CD8-positive, alpha-beta T cell (primary cell): ENCODE measurements at regions of chr2 and their contacts with region 1.

Region 1: DNA sequence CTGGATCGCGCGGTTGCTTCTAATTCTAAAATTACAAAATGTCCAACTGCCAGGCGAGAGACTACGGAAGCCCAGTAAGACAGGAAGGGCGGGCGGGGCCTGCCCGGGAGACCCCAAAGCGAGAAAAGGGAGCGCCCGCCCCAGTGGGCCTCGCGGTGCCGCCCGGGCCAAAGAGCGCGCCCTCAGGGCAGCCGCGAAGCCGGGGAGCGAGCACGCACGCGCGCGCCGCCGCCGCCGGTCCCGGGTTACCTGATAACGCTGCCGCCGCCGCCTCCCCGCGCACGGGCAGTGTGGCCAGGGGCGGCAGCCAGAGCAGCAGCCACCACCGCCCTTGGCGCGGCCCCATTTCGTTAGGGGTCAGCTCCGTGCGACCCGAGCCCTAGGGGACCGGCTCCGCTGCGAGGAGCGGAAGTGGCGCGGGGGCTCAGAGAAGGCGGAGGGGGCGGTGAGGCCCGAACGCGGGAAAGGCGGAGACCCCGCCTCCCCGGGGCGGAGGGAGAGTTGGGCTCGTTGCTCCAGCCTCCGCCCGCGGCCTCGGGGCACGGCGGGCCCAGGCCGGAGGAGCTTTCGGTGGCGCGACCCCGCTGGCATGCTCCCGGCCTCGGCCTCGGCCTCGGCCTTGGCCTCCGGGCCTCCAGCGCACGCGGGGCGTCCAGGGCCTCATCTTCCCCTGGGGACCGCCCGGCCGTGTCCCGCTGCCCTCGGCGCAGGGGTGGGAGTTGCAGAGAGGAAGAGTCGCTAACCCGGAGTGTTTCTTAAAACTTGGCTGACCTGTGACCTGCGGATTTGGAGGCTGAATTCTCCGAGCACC is at the start of gene NEMP2:
- DNase-seq: peak; percentile 69 to 93 (median 81)
- ATAC-seq: peak; percentile 68
- H3K4me3 ChIP-seq: peak within 1 kb of the TSS; percentile 67 to 73
- H3K4me3 Mint-ChIP-seq: peak within 1 kb of the TSS; percentile 96
- H3K27ac ChIP-seq: peak within 1 kb of the TSS; percentile 92 to 95
- H3K27ac Mint-ChIP-seq: peak within 1 kb of the TSS; percentile 100
- H3K4me1 ChIP-seq: peaks cover 39% of the 10 kb centered on the region
- H3K4me1 Mint-ChIP-seq: peaks cover 64% of the 10 kb centered on the region
- H3K27me3 ChIP-seq: no peaks in the 10 kb centered on the region
- H3K27me3 Mint-ChIP-seq: no peaks in the 10 kb centered on the region
- CTCF ChIP-seq: no peak
- total RNA-seq, gene NEMP2: 7.2 to 7.8 TPM

Region 2: GRCh38 chr2:189674374-189675112 is 860.0 kb before region 1 on chr2 and contains the start of gene ANKAR:
- CTCF ChIA-PET with region 1: no interaction called
- POLR2A ChIA-PET with region 1: no interaction called
- intact Hi-C with region 1: loop called in 1 of 2 experiments (anchors 10 kb)
- DNase-seq: peak; percentile 64 to 91 (median 79)
- ATAC-seq: peak; percentile 91
- H3K4me3 ChIP-seq: peak within 1 kb of the TSS; percentile 81 to 88
- H3K4me3 Mint-ChIP-seq: peak within 1 kb of the TSS; percentile 91
- H3K27ac ChIP-seq: peak within 1 kb of the TSS; percentile 86 to 97
- H3K27ac Mint-ChIP-seq: peak within 1 kb of the TSS; percentile 99
- H3K4me1 ChIP-seq: peaks cover 11% of the 10 kb centered on the region
- H3K4me1 Mint-ChIP-seq: peaks cover 49% of the 10 kb centered on the region
- H3K27me3 ChIP-seq: no peaks in the 10 kb centered on the region
- H3K27me3 Mint-ChIP-seq: no peaks in the 10 kb centered on the region
- CTCF ChIP-seq: peak; percentile 72
- total RNA-seq, gene ANKAR: 7.3 to 9.2 TPM

Region 3: GRCh38 chr2:190319555-190320498 is 214.7 kb before region 1 on chr2 and contains the start of gene HIBCH:
- CTCF ChIA-PET with region 1: interaction called, 3 read pairs
- POLR2A ChIA-PET with region 1: interaction called, 3 read pairs
- intact Hi-C with region 1: loop called in 1 of 2 experiments (anchors 5 kb)
- DNase-seq: peak; percentile 51 to 91 (median 83)
- ATAC-seq: peak; percentile 89
- H3K4me3 ChIP-seq: peak within 1 kb of the TSS; percentile 77 to 94
- H3K4me3 Mint-ChIP-seq: peak within 1 kb of the TSS; percentile 100
- H3K27ac ChIP-seq: peak within 1 kb of the TSS; percentile 66 to 88
- H3K27ac Mint-ChIP-seq: peak within 1 kb of the TSS; percentile 98
- H3K4me1 ChIP-seq: peaks cover 19% of the 10 kb centered on the region
- H3K4me1 Mint-ChIP-seq: peaks cover 50% of the 10 kb centered on the region
- H3K27me3 ChIP-seq: no peaks in the 10 kb centered on the region
- H3K27me3 Mint-ChIP-seq: no peaks in the 10 kb centered on the region
- CTCF ChIP-seq: peak; percentile 70
- total RNA-seq, gene HIBCH: 3.7 to 5.8 TPM

Region 4: GRCh38 chr2:190507135-190507534 is 27.4 kb before region 1 on chr2:
- CTCF ChIA-PET with region 1: no interaction called
- POLR2A ChIA-PET with region 1: no interaction called
- intact Hi-C with region 1: no loop called
- DNase-seq: no peak
- ATAC-seq: no peak
- H3K4me3 ChIP-seq: no peak overlapping the region
- H3K4me3 Mint-ChIP-seq: no peak overlapping the region
- H3K27ac ChIP-seq: no peak overlapping the region
- H3K27ac Mint-ChIP-seq: peak overlapping the region; percentile 81
- H3K4me1 ChIP-seq: no peaks in the 10 kb centered on the region
- H3K4me1 Mint-ChIP-seq: peaks cover 11% of the 10 kb centered on the region
- H3K27me3 ChIP-seq: no peaks in the 10 kb centered on the region
- H3K27me3 Mint-ChIP-seq: no peaks in the 10 kb centered on the region
- CTCF ChIP-seq: no peak

Region 5: GRCh38 chr2:190519975-190520767 is 14.3 kb before region 1 on chr2:
- CTCF ChIA-PET with region 1: interaction called, 5 read pairs
- POLR2A ChIA-PET with region 1: interaction called, 25 read pairs
- intact Hi-C with region 1: loop called in 1 of 2 experiments (anchors 1 kb)
- DNase-seq: peak in 1 of 9 experiments; percentile 48
- ATAC-seq: peak; percentile 74
- H3K4me3 ChIP-seq: no peak overlapping the region
- H3K4me3 Mint-ChIP-seq: peak overlapping the region; percentile 2
- H3K27ac ChIP-seq: peak overlapping the region in 1 of 2 experiments; percentile 49
- H3K27ac Mint-ChIP-seq: peak overlapping the region; percentile 22
- H3K4me1 ChIP-seq: peaks cover 41% of the 10 kb centered on the region
- H3K4me1 Mint-ChIP-seq: peaks cover 54% of the 10 kb centered on the region
- H3K27me3 ChIP-seq: no peaks in the 10 kb centered on the region
- H3K27me3 Mint-ChIP-seq: no peaks in the 10 kb centered on the region
- CTCF ChIP-seq: no peak

Region 6: DNA sequence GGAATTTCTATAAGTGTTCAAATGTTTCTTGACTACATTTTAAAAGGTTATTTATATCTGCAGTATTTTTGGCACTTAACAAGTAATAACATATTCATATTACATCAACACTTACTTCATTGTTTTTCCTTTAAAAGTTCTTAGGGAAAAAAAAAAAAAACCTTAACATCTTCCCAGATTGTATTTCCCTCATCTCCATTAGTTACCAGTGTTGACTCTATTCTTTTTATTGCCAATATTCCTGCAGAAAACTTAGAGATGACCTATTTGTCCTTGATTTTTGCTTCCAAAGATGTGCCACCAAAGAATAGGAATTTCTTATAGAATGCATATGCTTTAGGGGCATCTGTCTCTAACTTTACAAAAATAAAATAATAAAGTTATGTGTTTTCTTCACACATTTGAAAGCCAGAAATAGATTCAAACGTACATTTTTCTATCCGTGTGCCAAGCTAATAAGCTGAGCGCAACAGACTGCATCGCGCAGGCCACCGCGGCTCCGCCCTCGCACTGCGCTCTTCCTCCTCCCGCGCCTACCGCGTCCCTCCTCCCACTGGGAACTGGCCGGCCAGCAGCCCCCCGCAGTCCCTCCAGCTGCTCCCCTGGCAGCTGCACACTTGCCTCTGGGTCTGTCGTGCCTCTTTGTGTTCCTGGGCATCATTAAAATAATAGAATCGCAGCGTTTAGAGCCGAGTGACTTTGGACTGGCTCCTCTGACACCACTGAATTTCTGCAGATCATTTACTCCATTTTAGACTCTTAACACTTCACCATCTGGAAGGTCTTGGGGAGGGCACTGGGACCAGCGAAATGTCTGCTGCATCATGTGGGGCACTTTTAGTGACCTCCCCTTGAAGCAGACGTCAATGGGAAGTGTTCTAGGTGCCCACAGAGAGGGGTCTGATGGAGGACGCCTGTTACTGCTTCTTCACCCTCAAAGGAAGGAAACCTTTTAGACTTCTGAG is 93.2 kb after region 1 on chr2:
- CTCF ChIA-PET with region 1: no interaction called
- POLR2A ChIA-PET with region 1: no interaction called
- intact Hi-C with region 1: loop called in 1 of 2 experiments (anchors 5 kb)
- DNase-seq: peak in 6 of 9 experiments; percentile 26 to 59 (median 36)
- ATAC-seq: peak; percentile 82
- H3K4me3 ChIP-seq: peak overlapping the region; percentile 57 to 60
- H3K4me3 Mint-ChIP-seq: peak overlapping the region; percentile 94
- H3K27ac ChIP-seq: peak overlapping the region; percentile 33 to 35
- H3K27ac Mint-ChIP-seq: peak overlapping the region; percentile 92
- H3K4me1 ChIP-seq: peaks cover 13% of the 10 kb centered on the region
- H3K4me1 Mint-ChIP-seq: peaks cover 27% of the 10 kb centered on the region
- H3K27me3 ChIP-seq: no peaks in the 10 kb centered on the region
- H3K27me3 Mint-ChIP-seq: no peaks in the 10 kb centered on the region
- CTCF ChIP-seq: no peak

Region 7: GRCh38 chr2:190755772-190756415 is 221.4 kb after region 1 on chr2:
- CTCF ChIA-PET with region 1: no interaction called
- POLR2A ChIA-PET with region 1: no interaction called
- intact Hi-C with region 1: no loop called
- DNase-seq: no peak
- ATAC-seq: no peak
- H3K4me3 ChIP-seq: no peak overlapping the region
- H3K4me3 Mint-ChIP-seq: no peak overlapping the region
- H3K27ac ChIP-seq: no peak overlapping the region
- H3K27ac Mint-ChIP-seq: no peak overlapping the region
- H3K4me1 ChIP-seq: no peaks in the 10 kb centered on the region
- H3K4me1 Mint-ChIP-seq: peaks cover 5% of the 10 kb centered on the region
- H3K27me3 ChIP-seq: no peaks in the 10 kb centered on the region
- H3K27me3 Mint-ChIP-seq: no peaks in the 10 kb centered on the region
- CTCF ChIP-seq: no peak

Region 8: DNA sequence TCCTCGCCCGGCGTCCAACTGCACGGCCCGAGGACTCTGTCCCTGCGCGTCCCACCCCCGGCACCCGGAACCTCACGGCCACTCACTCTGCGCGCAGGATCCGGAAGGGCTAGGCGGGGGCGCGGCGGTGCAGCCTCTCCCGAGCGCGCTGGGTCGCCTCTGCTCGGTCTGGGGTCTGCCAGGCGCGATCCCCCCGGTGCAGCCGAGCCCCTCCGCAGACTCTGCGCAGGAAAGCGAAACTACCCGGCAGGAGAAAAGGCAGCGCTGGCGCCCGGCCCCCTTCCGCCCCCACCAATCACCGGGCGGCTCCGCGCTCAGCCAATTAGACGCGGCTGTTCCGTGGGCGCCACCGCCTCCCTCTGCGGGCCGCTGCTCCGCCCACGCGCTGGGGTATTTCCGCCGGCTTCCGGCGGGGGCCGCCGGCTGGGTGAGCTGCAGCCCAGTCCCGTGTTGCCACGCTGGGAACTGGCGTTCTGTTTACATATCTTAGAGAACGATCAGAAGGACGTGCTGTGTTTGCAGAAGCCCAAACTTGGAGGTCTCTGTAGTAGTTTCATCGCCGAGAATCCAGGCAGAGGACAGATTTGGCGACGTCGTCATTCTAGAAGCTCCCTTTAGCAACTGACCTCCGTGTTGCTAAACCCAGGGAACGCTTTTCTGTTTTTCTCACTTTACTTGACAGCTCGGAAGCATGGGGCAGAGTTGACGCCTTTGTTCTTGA is 479.6 kb after region 1 on chr2 and contains the start of gene STAT1:
- CTCF ChIA-PET with region 1: no interaction called
- POLR2A ChIA-PET with region 1: no interaction called
- intact Hi-C with region 1: loop called in 1 of 2 experiments (anchors 10 kb)
- DNase-seq: peak; percentile 93 to 98 (median 96)
- ATAC-seq: peak; percentile 87
- H3K4me3 ChIP-seq: peak within 1 kb of the TSS; percentile 61 to 88
- H3K4me3 Mint-ChIP-seq: no peak within 1 kb of the TSS
- H3K27ac ChIP-seq: peak within 1 kb of the TSS; percentile 91 to 94
- H3K27ac Mint-ChIP-seq: no peak within 1 kb of the TSS
- H3K4me1 ChIP-seq: peaks cover 59% of the 10 kb centered on the region
- H3K4me1 Mint-ChIP-seq: peaks cover 44% of the 10 kb centered on the region
- H3K27me3 ChIP-seq: no peaks in the 10 kb centered on the region
- H3K27me3 Mint-ChIP-seq: no peaks in the 10 kb centered on the region
- CTCF ChIP-seq: no peak
- total RNA-seq, gene STAT1: 66.7 to 69.9 TPM

Region 9: DNA sequence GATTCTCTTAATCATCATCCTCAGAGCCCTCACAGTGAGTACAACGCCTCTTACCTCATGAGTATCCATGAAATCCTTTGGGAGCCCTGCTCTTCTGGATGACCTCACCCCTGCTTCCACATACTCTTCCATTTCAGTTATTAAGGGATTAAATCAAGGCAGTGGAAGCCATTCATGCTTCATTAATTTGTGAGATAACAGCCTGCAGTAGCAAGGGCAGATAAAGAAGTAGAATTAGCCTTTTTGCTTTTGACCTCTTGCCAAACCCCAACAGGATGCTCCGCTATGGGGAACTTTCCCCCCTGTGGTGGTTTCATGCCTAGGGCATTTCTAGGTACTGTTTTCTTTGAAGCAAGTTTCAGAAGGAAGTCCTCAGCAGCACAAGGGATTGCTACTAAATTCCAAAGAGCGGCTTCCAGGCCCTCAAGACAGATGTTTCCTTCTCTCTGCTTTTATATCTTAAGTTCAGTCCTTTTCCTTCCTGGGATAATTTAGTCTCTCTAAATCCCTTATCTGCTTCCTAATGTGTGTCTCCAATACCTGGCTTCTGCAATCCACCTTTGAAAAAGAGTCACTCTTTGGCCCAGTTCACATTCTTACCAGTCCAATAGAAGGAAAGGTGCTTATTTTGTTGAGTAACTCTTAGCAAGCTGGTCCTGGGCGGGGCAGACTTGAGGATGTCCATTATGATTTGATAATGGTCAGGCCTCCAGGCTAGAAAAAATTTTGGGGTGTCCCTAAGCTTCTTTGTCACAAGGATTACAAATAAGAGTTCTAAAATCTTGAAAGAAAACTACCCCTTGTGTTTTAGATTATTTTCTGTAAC is 787.6 kb after region 1 on chr2:
- CTCF ChIA-PET with region 1: no interaction called
- POLR2A ChIA-PET with region 1: no interaction called
- intact Hi-C with region 1: no loop called
- DNase-seq: peak in 2 of 9 experiments; percentile 23 to 52
- ATAC-seq: no peak
- H3K4me3 ChIP-seq: no peak overlapping the region
- H3K4me3 Mint-ChIP-seq: no peak overlapping the region
- H3K27ac ChIP-seq: no peak overlapping the region
- H3K27ac Mint-ChIP-seq: no peak overlapping the region
- H3K4me1 ChIP-seq: peaks cover 15% of the 10 kb centered on the region
- H3K4me1 Mint-ChIP-seq: peaks cover 15% of the 10 kb centered on the region
- H3K27me3 ChIP-seq: no peaks in the 10 kb centered on the region
- H3K27me3 Mint-ChIP-seq: peaks cover 3% of the 10 kb centered on the region
- CTCF ChIP-seq: no peak